Breast epithelium (tissue), 4 donors: ENCODE measurements at regions of chr11 and their contacts with region 1.

Region 1: DNA sequence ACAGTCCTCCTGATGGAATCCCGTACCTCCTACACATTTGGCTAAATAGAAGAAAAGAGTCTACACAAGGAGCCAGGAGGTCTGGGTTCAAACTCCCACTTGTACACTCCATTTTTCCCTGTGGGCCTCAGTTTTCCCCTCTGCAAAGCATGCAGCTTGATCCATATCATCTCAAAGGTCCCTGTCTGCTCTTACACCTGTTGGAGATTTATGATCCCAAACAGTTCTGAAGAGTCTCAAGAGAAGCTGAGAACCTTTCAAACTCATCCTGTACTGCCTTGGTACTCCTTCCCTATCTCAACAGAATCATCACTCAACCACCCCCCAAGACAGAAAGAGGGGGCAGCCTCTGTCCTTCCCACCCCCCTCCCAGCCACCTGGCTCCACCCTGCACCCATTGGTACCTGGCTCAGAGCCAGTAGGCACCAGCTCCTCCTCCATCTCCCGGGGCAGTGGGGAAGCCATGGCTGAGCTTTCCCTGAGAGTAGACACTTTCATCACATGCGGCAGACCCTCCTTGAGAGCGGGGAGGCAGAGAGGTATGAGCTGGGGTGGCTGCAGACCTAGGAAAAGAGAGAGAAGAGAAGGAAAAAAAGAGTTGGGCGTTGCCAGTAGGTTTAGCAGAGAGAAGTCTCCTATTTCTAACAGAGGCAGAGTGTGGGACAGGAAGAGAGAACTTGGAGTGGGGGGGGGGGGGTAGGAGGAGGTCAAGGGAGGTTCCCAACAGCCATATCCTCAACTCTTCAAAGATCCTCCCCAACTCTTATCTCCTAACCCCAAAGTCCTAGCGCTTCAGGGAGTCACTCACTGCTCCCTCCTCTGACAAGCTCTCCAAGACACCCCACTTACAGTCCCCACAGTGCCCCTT is 3.1 kb downstream of the TNKS1BP1 start:
- DNase-seq: no peak
- H3K4me3 ChIP-seq: peak overlapping the region; percentile 37 to 92 (median 91)
- H3K27ac ChIP-seq: peak overlapping the region; percentile 98
- H3K4me1 ChIP-seq: peaks cover 22 to 39% of the 10 kb centered on the region in 2 donors
- H3K27me3 ChIP-seq: no peaks in the 10 kb centered on the region
- CTCF ChIP-seq: no peak
- POLR2A ChIP-seq: no peak

Region 2: DNA sequence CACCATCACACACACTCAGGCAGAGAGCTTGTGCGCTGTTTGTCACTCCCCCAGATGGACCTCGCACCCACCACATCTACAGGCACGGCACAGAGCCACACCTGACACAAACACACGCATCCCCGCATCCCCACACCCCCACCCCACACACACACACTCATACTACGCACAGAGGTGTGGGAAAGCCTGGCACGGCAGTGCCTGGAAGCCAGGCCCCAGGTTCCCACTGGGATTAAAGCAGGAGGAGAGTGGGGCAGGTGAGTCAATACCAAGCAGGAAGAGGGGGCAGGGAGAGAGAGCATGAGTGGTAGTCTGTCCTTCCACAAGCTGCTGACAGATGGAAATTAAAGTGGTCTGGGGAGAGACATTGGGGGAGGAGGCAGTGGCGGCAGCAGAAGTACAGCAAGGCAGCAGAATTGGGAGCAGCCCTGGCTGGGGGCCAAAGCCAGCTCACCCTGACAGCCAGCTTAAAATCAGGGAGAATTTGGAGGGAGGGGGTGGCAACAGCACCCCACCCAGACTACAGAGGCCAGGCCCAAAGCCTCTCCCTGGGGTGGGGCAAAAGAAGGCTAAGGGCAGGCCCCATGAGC is 17.5 kb before region 1 on chr11:
- intact Hi-C with region 1: loop called (anchors 1 kb)
- DNase-seq: no peak
- H3K4me3 ChIP-seq: peak overlapping the region in 1 of 3 donors; percentile 40
- H3K27ac ChIP-seq: peak overlapping the region; percentile 8 to 64
- H3K4me1 ChIP-seq: peaks cover 14 to 17% of the 10 kb centered on the region in 2 donors
- H3K27me3 ChIP-seq: no peaks in the 10 kb centered on the region
- CTCF ChIP-seq: no peak
- POLR2A ChIP-seq: no peak